Common myeloid progenitor, CD34-positive (primary cell): ENCODE measurements at regions of chr14 and their contacts with region 1.

Region 1: DNA sequence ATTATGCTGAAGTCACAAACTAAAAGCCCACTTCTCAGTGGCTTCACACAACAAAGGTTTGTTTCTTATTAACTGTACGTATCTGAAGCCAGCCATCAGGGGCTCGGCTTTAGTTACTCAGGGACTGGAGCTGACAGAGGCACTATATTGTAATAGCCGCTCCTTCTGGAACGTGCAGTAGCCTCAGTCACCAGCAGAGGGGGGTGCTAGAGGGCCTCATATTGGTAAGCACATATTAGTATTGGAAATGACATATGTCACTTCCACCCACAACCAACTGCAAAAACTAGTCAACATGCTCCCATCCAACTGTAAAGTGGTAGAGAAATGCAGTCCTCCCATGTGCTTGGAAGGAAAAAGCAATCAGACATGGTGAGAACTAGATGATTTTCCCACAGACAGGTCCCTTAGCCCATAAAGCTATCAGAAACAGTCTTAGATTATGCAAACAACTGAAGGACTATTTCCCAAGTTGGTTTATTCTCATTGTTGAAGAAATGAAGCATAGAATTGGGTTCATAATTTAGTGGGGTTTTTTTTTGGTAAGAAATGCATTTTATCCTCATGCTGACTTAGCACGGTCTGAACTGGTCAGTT is 183.6 kb upstream of the G2E3 start:
- DNase-seq: peak; percentile 65 to 79 (median 74)
- H3K4me3 ChIP-seq: no peak overlapping the region
- H3K27ac ChIP-seq: no peak overlapping the region
- H3K4me1 ChIP-seq: no peaks in the 10 kb centered on the region
- H3K27me3 ChIP-seq: no peaks in the 10 kb centered on the region

Region 2: DNA sequence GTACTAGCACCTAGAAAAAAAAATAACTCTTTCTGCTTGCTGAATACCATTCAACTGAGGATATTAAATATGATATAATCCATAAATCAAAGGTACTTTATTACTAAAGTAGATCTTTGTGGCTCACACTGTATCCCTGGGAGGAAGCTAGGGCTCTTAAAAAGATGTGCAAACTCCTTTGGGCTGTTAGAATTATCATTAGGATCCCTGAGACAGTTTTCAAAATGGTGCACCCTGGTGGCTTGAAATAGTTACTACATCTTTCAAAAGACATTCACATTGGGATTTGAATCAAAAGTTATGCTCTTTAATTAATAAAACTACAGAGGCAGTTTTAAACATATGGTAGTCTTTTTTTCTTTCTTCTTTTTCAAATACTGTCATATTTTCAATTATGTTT is 44.9 kb before region 1 on chr14:
- CTCF ChIA-PET with region 1: no interaction called
- POLR2A ChIA-PET with region 1: no interaction called
- DNase-seq: peak in 2 of 3 donors; percentile 1 to 6
- H3K4me3 ChIP-seq: no peak overlapping the region
- H3K27ac ChIP-seq: no peak overlapping the region
- H3K4me1 ChIP-seq: no peaks in the 10 kb centered on the region
- H3K27me3 ChIP-seq: no peaks in the 10 kb centered on the region

Region 3: DNA sequence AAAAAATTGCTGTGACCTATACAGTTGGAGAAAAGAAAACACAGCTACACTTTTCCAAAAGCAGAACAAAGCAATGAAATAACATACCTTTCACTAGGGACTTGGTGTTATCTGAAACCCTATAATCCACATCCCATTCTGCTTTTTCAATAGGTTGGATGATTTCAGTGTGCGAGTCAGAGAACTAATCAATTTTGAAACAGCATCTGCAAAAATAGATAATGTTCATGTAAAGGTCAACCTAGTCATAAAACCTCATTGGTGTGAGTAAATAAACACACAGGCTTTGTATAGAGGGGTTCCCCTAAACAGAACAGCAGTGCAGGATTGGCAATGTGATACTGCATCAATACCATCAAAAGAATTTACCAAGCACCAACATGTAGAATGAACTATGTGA is 10.5 kb after region 1 on chr14:
- CTCF ChIA-PET with region 1: interaction called, 12 read pairs
- POLR2A ChIA-PET with region 1: no interaction called
- DNase-seq: no peak
- H3K4me3 ChIP-seq: no peak overlapping the region
- H3K27ac ChIP-seq: no peak overlapping the region
- H3K4me1 ChIP-seq: no peaks in the 10 kb centered on the region
- H3K27me3 ChIP-seq: peaks cover 0 to 5% (median 4%) of the 10 kb centered on the region in 5 experiments

Region 4: DNA sequence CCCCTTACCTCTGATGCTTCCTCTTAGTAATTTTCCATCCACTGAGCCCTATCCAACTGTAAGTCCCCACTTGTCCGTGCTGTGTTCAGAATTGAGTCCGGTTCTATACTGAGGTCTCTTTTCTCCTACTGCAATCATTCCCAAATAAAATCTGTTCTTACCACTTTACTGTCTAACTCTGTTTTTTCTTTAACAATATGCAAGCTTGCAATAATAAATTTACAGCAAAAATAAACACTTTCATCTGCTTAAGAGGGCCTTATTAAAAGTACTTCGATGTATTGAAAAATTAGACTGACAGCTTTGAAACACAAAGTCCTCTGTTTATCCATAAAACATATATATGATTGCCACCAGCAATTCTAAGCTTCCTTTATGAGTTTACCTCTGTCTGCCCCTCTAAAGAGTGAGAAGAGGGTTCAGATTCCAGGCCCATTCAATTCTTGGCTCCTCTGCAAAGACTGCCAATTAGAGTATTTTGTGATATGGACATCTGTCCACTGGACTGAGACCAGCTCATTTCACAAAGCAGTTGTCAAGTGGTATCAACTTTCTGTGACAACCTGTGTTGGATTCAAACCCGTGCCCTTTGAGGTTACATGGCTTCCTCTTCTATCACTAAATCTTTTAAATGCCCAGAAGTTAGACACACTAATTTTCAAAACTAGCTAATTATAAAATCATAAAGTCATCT is 143.6 kb after region 1 on chr14:
- CTCF ChIA-PET with region 1: interaction called, 14 read pairs
- POLR2A ChIA-PET with region 1: no interaction called
- DNase-seq: no peak
- H3K4me3 ChIP-seq: no peak overlapping the region
- H3K27ac ChIP-seq: no peak overlapping the region
- H3K4me1 ChIP-seq: peaks cover 0 to 5% (median 2%) of the 10 kb centered on the region in 4 experiments
- H3K27me3 ChIP-seq: no peaks in the 10 kb centered on the region

Region 5: GRCh38 chr14:30610787-30611343 is 235.5 kb after region 1 on chr14:
- CTCF ChIA-PET with region 1: interaction called, 25 read pairs
- POLR2A ChIA-PET with region 1: no interaction called
- DNase-seq: peak; percentile 79 to 92 (median 90)
- H3K4me3 ChIP-seq: no peak overlapping the region
- H3K27ac ChIP-seq: no peak overlapping the region
- H3K4me1 ChIP-seq: peaks cover 0 to 13% (median 3%) of the 10 kb centered on the region in 4 experiments
- H3K27me3 ChIP-seq: no peaks in the 10 kb centered on the region